GM13977 (cell line): ENCODE measurements at regions of chr5 and their contacts with region 1.

Region 1: GRCh38 chr5:431001-431710 is 11.8 kb upstream of the EXOC3 start:
- DNase-seq: peak; percentile 77
- CTCF ChIP-seq: peak; percentile 84

Region 2: GRCh38 chr5:247551-248249 is 183.5 kb before region 1 on chr5:
- in situ Hi-C with region 1: no loop called
- DNase-seq: no peak
- CTCF ChIP-seq: no peak

Region 3: DNA sequence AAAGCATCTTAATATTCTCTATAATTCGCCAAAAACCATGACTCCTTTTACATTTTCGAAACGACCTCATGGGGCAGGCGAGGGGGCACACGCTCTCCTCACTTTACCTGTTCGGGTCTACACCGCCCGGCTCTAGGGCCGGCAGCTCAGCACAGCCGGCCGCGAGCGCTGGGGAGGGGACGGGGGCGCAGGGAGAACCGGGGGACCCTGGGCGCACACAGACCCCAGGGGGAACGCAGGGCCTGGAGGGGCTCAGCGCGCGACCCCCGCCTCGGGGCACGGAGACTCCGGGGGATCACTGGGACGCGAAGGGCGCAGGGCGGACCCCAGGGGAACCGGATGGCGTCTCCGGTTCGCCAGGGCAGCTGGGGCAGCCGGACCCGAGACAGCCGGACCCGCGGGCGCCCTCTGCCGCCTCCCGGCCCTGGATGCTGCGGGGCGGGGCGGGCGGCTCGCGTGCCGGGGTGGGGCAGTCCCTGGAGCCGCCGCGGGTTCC is 109.9 kb before region 1 on chr5 and contains the start of gene AHRR:
- in situ Hi-C with region 1: loop called (anchors 10 kb)
- DNase-seq: peak; percentile 92
- CTCF ChIP-seq: peak; percentile 65